ENCODE measurements at regions of chr13 and their contacts with region 1.

Region 1: GRCh38 chr13:77774181-77774580 is 76.7 kb downstream of the SLAIN1 start:
- DNase-seq: no peak
- H3K4me3 ChIP-seq: no peak overlapping the region
- H3K27ac ChIP-seq: no peak overlapping the region
- H3K4me1 ChIP-seq: no peaks in the 10 kb centered on the region
- H3K27me3 ChIP-seq: no peaks in the 10 kb centered on the region
- CTCF ChIP-seq: no peak

Region 2: DNA sequence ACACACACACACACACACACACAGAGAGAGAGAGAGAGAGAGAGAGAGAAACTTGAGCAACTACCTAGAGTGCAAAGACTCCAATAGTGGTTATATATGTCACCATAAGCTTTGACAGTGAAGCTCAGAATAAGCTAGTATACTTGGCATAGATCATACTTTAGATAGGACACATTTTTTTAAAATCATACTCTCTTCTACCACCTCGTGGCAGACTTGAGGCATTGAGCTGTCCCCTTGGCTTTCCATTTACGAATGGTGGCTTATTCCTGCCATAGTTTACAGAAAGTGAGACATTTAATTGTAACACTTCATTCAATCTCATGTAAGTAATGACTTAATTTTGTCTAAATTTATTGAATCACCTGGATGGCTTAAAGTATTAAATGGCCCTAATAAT is 36.2 kb after region 1 on chr13:
- CTCF ChIA-PET with region 1: interaction called, 10 read pairs
- POLR2A ChIA-PET with region 1: no interaction called
- intact Hi-C with region 1: no loop called
- DNase-seq: peak in 1 of 2 experiments; percentile 43
- H3K4me3 ChIP-seq: no peak overlapping the region
- H3K27ac ChIP-seq: no peak overlapping the region
- H3K4me1 ChIP-seq: 0 out of 2 replicates have a peak, but pooled peaks cover 5% of the 10 kb centered on the region
- H3K27me3 ChIP-seq: no peaks in the 10 kb centered on the region
- CTCF ChIP-seq: peak; percentile 54; the same call in 1 of the 2 replicates

Region 3: GRCh38 chr13:77928909-77929308 is 154.7 kb after region 1 on chr13:
- CTCF ChIA-PET with region 1: no interaction called
- POLR2A ChIA-PET with region 1: no interaction called
- intact Hi-C with region 1: no loop called
- DNase-seq: no peak
- H3K4me3 ChIP-seq: no peak overlapping the region
- H3K27ac ChIP-seq: no peak overlapping the region
- H3K4me1 ChIP-seq: no peaks in the 10 kb centered on the region
- H3K27me3 ChIP-seq: no peaks in the 10 kb centered on the region
- CTCF ChIP-seq: no peak

Measured in PC-9 (cell line).